ENCODE measurements at regions of chr11 and their contacts with region 1.

Region 1: DNA sequence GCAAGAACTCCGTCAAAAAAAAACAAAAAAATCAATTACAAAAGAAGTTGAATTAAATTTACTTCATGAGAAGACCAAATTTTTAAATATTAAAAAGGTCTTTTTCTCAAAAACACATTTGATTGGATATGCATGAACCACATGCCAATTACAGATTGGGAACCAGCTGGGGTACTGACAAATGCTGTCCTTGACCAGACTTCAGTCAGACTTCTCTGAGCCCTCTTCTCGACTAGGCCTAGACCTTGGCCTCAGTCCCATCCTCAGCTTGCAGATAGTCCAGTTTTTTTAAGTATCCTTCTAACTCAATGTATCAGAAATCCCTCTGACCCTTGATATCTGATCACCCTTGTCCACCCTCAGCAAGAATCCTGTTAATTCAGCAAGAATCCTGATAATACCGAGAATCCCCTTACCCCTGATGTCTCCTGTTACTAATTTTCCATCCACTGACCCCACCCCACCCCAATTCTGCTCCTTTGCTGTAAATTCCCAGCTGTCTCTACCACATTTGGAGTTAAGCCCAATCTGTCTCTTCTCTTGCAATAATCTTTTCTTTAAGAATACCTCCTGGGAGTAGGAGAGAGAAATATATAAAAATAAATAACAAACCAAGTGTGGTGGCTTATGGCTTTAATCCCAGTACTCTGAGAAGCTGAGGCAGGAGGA is 30.9 kb downstream of the OR4D9 start:
- DNase-seq: no peak
- ATAC-seq: no peak
- H3K4me3 ChIP-seq: no peak overlapping the region
- H3K4me3 Mint-ChIP-seq: no peak overlapping the region
- H3K27ac ChIP-seq: no peak overlapping the region
- H3K27ac Mint-ChIP-seq: no peak overlapping the region
- H3K4me1 ChIP-seq: peaks cover 0 to 7% of the 10 kb centered on the region in 2 donors
- H3K4me1 Mint-ChIP-seq: peaks cover 3% of the 10 kb centered on the region
- H3K27me3 ChIP-seq: no peaks in the 10 kb centered on the region
- H3K27me3 Mint-ChIP-seq: peaks cover 6% of the 10 kb centered on the region
- CTCF ChIP-seq: no peak

Region 2: DNA sequence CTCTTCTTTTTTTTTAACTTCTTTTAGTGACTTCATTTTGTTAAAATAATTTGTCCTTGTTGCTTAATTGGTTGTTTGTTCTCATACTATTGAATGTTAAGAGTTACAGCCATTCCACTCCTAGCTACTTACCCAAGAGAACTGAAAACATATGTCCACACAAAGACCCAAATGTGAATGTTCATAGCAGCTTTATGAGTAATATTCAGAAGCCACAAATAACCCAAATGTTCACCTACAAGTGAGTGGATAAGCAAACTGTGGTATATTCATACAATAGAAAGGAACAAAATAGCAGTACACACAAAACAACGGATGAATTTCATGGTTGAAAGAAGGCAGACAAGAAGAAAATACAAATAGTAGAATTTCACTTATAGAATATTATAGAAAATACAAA is 40.3 kb before region 1 on chr11:
- CTCF ChIA-PET with region 1: no interaction called
- POLR2A ChIA-PET with region 1: no interaction called
- intact Hi-C with region 1: no loop called
- DNase-seq: no peak
- ATAC-seq: no peak
- H3K4me3 ChIP-seq: no peak overlapping the region
- H3K4me3 Mint-ChIP-seq: no peak overlapping the region
- H3K27ac ChIP-seq: no peak overlapping the region
- H3K27ac Mint-ChIP-seq: no peak overlapping the region
- H3K4me1 ChIP-seq: no peaks in the 10 kb centered on the region
- H3K4me1 Mint-ChIP-seq: no peaks in the 10 kb centered on the region
- H3K27me3 ChIP-seq: peaks cover 0 to 5% (median 0%) of the 10 kb centered on the region in 4 experiments
- H3K27me3 Mint-ChIP-seq: peaks cover 10% of the 10 kb centered on the region
- CTCF ChIP-seq: no peak

Region 3: DNA sequence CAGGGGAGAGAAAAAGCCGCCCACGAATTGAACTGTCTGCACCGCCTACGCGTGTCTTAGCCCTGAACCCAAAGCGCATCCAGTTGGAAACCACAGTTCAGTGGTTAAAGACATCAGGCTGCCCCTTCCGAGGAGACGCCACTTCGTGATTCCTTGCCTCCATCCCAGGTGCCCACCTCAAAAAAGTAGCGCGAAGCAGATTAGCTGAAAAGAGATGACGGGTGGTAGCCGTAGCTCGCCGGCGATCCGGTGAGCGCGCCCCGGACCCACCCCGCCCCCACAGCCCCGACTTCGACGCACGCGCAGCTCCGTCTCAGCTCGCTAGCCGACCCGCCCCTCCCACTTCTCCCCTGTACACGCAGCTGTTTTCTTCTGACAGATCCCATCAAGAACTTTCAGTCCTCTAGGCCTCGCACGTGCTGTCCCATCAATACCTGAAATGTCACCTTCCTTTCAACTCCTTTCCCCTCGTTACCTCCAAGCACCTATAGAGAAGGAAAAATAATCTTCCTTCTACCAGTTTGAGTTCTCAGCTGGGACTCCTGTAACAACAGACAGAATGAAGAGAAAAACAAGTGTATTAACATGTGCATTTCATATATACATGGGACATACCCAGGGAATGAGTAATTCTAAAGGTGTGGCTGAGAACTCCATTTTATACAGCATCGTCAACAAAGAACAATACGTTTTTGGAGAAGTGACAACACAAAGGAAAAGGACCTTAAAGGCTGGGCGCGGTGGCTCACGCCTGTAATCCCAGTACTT is 18.6 kb after region 1 on chr11:
- CTCF ChIA-PET with region 1: interaction called, 22 read pairs
- POLR2A ChIA-PET with region 1: no interaction called
- intact Hi-C with region 1: no loop called
- DNase-seq: peak; percentile 92
- ATAC-seq: peak; percentile 79
- H3K4me3 ChIP-seq: peak overlapping the region; percentile 84 to 98 (median 92)
- H3K4me3 Mint-ChIP-seq: peak overlapping the region; percentile 95
- H3K27ac ChIP-seq: peak overlapping the region; percentile 72 to 84
- H3K27ac Mint-ChIP-seq: peak overlapping the region; percentile 98
- H3K4me1 ChIP-seq: peaks cover 22 to 49% of the 10 kb centered on the region in 2 donors
- H3K4me1 Mint-ChIP-seq: peaks cover 44% of the 10 kb centered on the region
- H3K27me3 ChIP-seq: peaks cover 0 to 3% (median 1%) of the 10 kb centered on the region in 4 experiments
- H3K27me3 Mint-ChIP-seq: no peaks in the 10 kb centered on the region
- CTCF ChIP-seq: no peak

Region 4: DNA sequence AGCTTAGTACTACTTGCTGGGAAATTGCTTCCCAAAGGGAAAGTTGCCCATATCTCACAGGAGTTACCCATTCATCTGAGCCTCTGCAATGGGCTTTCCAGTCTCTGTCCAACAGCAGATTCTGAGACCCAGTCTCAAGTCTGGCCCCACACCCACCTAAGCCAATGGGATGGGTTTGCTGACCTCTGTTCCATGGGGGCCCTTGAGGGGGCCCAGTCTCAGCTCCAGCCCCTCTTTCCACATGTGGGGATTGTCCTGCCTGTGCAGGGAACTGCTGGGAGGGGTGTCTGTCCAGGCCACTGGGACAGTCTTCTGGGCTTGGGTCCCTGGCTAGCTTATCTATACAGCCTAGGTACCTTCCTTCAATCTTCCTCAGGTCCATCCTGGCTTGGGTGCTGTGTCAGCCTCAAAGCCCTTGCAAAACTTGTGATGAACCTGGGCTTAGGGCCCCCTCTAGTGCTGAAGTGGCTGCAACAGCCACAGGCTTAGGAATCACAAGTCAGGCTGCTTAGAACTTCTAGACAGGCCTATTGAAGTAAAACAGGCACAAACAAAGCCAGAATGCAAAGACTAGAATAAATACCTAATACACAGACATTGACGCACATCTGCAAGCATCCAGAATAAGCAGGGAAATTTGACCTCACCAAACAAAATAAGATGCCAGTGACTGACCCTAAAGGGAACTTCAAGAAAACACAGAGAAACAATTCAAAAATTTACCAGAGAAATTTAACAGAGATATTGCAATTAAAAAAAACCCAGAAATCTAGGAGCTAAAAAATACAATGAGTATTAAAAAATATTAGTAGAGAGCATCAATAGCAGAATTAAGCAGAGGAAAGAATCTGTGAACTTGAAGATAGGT is 138.2 kb after region 1 on chr11:
- CTCF ChIA-PET with region 1: interaction called, 12 read pairs
- POLR2A ChIA-PET with region 1: no interaction called
- intact Hi-C with region 1: no loop called
- DNase-seq: peak; percentile 71
- ATAC-seq: peak; percentile 91
- H3K4me3 ChIP-seq: no peak overlapping the region
- H3K4me3 Mint-ChIP-seq: no peak overlapping the region
- H3K27ac ChIP-seq: no peak overlapping the region
- H3K27ac Mint-ChIP-seq: no peak overlapping the region
- H3K4me1 ChIP-seq: no peaks in the 10 kb centered on the region
- H3K4me1 Mint-ChIP-seq: no peaks in the 10 kb centered on the region
- H3K27me3 ChIP-seq: peaks cover 0 to 6% (median 0%) of the 10 kb centered on the region in 4 experiments
- H3K27me3 Mint-ChIP-seq: peaks cover 16% of the 10 kb centered on the region
- CTCF ChIP-seq: peak; percentile 68

Region 5: DNA sequence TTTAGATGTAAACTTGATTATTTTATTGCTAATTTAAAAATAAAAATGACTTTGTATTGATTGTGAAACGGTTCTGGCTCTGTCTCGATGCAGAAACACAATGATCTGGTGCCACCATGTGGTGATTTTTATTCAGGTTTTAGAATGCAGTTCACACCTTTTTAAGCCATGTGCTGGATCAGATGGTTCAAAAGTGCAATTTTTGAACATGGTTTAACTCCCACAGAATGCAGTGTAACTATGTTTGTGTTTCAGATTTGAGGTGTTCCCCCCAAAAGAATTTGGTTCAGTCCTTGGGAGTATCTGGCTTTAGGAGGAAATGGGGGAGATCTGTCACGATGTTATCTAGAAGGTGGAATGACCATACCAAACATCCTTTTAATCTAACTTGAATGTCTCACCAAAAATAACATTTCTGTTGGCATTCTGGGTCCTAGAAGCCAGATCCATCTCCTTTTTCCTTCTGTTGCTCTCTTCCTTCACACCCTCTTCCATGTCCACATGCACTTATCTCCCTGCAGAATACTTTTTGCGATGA is 260.4 kb after region 1 on chr11:
- CTCF ChIA-PET with region 1: interaction called, 19 read pairs
- POLR2A ChIA-PET with region 1: interaction called, 10 read pairs
- intact Hi-C with region 1: loop called (anchors 1 kb)
- DNase-seq: peak; percentile 79
- ATAC-seq: peak; percentile 64
- H3K4me3 ChIP-seq: no peak overlapping the region
- H3K4me3 Mint-ChIP-seq: no peak overlapping the region
- H3K27ac ChIP-seq: no peak overlapping the region
- H3K27ac Mint-ChIP-seq: no peak overlapping the region
- H3K4me1 ChIP-seq: no peaks in the 10 kb centered on the region
- H3K4me1 Mint-ChIP-seq: no peaks in the 10 kb centered on the region
- H3K27me3 ChIP-seq: no peaks in the 10 kb centered on the region
- H3K27me3 Mint-ChIP-seq: no peaks in the 10 kb centered on the region
- CTCF ChIP-seq: peak; percentile 80

Region 6: GRCh38 chr11:60251485-60252212 is 709.4 kb after region 1 on chr11:
- CTCF ChIA-PET with region 1: no interaction called
- POLR2A ChIA-PET with region 1: no interaction called
- intact Hi-C with region 1: no loop called
- DNase-seq: no peak
- ATAC-seq: peak; percentile 21
- H3K4me3 ChIP-seq: no peak overlapping the region
- H3K4me3 Mint-ChIP-seq: no peak overlapping the region
- H3K27ac ChIP-seq: no peak overlapping the region
- H3K27ac Mint-ChIP-seq: no peak overlapping the region
- H3K4me1 ChIP-seq: peaks cover 0 to 6% of the 10 kb centered on the region in 2 donors
- H3K4me1 Mint-ChIP-seq: peaks cover 2% of the 10 kb centered on the region
- H3K27me3 ChIP-seq: peaks cover 0 to 4% (median 1%) of the 10 kb centered on the region in 4 experiments
- H3K27me3 Mint-ChIP-seq: peaks cover 4% of the 10 kb centered on the region
- CTCF ChIP-seq: peak; percentile 19

Measured in B cell (primary cell).